Mammary epithelial cell (primary cell): ENCODE measurements at regions of chr2 and their contacts with region 1.

Region 1: DNA sequence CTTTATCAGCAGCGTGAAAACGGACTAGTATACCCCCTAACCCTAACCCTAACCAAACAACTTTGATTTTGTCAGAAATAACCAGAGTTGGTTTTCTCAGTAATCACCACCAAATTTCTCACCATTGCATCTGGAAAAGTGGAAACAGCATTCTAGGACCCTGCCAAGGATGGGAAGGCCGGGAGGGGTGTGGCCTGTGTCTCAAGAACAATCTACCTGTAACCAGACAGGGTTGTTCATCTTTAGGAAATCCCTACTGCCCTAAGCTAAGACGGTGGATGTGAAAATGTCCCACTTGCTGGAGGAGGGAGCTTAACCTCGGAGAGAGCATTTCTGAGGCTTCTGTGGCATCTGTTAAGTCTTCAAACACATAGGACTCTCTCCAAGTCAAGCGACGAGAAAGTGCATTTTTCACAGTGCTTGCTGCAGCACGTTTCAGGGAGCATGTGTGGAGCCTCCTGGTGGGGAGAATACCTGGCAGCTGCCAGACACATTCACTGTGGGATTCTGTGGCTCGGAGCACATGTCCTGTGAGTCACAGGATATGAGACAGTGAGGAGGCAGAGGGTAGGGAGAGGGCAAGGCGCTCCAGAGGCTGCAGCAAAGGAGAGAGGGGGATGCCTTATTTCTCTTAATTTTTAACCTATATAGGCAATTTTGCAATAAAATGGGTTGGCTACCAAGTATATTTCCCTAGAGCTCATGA is 207.5 kb downstream of the SPP2 start:
- DNase-seq: peak; percentile 99
- H3K4me3 ChIP-seq: no peak overlapping the region
- H3K27ac ChIP-seq: peak overlapping the region; percentile 99
- H3K4me1 ChIP-seq: peaks cover 76% of the 10 kb centered on the region
- H3K27me3 ChIP-seq: no peaks in the 10 kb centered on the region
- CTCF ChIP-seq: peak; percentile 82 to 83

Region 2: DNA sequence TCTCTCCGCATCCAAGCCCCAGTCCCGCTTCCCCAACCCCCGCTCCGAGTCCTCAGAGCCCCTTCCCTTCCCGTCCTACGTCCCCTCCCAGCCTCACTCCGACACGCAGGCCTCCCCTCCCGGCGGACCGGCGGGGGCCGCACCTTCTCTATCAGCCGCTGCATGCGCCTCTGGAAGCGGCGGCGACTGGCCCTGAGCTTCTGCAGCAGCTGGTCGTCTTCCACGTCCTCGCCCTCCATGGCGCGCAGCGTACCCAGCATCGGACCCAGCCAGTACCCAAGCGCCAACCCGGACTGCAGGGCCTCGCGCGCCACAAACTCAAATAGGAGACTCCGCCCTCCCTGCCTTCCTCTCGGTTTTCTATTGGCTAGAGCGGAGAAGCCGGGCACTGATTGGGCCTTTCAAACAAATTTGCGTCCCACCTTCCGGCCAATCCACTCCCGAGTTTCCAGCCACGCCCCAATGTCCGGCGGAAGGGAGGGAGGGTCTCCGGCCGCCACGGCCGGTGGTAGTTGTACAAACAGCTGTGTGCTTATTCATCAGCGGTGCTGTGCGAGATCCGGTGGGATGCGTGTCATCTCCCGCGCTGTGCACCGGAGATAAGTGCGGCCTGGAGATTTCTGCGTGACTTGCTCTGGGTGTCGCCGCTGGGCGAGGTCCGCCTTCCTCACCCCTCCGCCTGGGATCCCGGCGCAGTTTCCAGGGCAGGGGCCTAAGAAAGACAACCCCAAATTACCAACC is 403.6 kb before region 1 on chr2 and contains the start of gene HJURP:
- CTCF ChIA-PET with region 1: no interaction called
- dilution Hi-C with region 1: no loop called
- in situ Hi-C with region 1: no loop called
- intact Hi-C with region 1: loop called (anchors 10 kb)
- DNase-seq: peak; percentile 93
- H3K4me3 ChIP-seq: peak within 1 kb of the TSS; percentile 94 to 95 (median 95)
- H3K27ac ChIP-seq: peak within 1 kb of the TSS; percentile 53
- H3K4me1 ChIP-seq: peaks cover 26% of the 10 kb centered on the region
- H3K27me3 ChIP-seq: no peaks in the 10 kb centered on the region
- CTCF ChIP-seq: no peak
- total RNA-seq, gene HJURP: 0.67 to 43.5 TPM

Region 3: DNA sequence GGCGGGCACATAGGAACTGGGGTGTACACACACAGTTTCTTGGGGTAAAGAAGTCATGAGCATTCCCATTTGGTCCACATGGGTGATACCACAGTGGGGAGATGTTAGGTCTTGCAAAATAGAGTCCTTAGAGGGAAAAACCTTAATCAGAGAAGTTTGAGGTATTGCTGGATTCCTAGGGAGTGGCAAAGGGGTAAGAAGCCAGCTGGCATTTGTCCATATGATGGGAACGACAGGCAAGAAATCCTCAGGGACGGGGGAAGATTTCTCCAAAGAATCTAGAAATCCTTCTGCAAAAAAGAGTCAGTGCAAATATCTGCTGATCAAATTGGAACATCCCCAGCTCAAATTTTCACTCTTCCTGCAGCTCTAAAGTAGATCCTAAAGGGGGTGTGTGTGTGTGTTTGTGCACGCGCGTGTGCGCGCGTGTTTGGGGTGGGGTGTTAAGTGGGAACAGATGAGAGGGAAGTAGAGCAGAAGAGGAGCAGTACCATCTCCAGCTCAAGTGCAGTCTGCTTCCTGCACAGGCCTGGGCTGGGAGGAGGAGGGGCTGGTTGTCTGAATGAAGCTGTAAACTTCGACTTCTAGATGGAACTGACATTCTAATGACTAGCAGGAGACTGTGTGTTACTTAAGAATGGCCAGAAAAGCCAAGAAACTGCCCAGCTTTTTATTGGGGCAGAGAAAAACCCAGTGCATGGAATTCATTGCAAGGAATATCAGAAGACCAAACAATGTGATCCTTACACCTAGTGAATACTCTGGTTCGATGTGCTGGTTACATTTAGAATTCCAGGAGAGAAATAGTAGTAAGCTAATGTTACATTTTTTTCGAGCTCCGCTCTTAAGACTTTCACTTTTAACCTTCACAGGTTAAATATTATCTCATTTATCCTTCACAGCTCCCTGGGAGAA is 39.5 kb before region 1 on chr2:
- CTCF ChIA-PET with region 1: no interaction called
- dilution Hi-C with region 1: no loop called
- in situ Hi-C with region 1: no loop called
- intact Hi-C with region 1: no loop called
- DNase-seq: no peak
- H3K4me3 ChIP-seq: no peak overlapping the region
- H3K27ac ChIP-seq: no peak overlapping the region
- H3K4me1 ChIP-seq: peaks cover 5% of the 10 kb centered on the region
- H3K27me3 ChIP-seq: no peaks in the 10 kb centered on the region
- CTCF ChIP-seq: no peak

Region 4: DNA sequence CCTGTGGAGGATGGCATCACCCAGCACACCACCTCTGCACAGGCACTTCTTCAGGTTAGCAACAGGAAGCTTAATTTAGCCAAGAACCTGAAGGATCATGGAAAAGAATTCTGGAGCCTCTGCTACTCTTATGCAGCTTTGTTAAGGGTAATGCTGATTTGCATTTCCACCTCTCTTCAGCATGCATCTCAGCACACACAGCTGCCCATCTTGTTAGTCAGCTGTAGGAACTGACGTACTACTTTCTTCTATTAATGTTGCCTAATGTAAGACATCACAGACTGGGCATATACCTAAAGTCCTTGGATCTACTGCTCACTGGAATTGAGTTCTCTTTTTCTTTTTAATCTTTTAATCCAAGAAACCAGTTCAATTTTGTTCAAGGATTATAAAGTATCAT is 26.5 kb before region 1 on chr2:
- CTCF ChIA-PET with region 1: no interaction called
- dilution Hi-C with region 1: no loop called
- in situ Hi-C with region 1: no loop called
- intact Hi-C with region 1: no loop called
- DNase-seq: no peak
- H3K4me3 ChIP-seq: no peak overlapping the region
- H3K27ac ChIP-seq: no peak overlapping the region
- H3K4me1 ChIP-seq: no peaks in the 10 kb centered on the region
- H3K27me3 ChIP-seq: no peaks in the 10 kb centered on the region
- CTCF ChIP-seq: no peak

Region 5: GRCh38 chr2:234241656-234242458 is 16.2 kb before region 1 on chr2:
- CTCF ChIA-PET with region 1: no interaction called
- dilution Hi-C with region 1: no loop called
- in situ Hi-C with region 1: no loop called
- intact Hi-C with region 1: loop called (anchors 1 kb)
- DNase-seq: peak; percentile 93
- H3K4me3 ChIP-seq: peak overlapping the region in 2 of 3 experiments; percentile 1 to 27
- H3K27ac ChIP-seq: peak overlapping the region; percentile 95
- H3K4me1 ChIP-seq: peaks cover 52% of the 10 kb centered on the region
- H3K27me3 ChIP-seq: no peaks in the 10 kb centered on the region
- CTCF ChIP-seq: no peak

Region 6: GRCh38 chr2:234308813-234309195 is 50.8 kb after region 1 on chr2:
- CTCF ChIA-PET with region 1: no interaction called
- dilution Hi-C with region 1: loop called (anchors 5 kb)
- in situ Hi-C with region 1: no loop called
- intact Hi-C with region 1: no loop called
- DNase-seq: no peak
- H3K4me3 ChIP-seq: no peak overlapping the region
- H3K27ac ChIP-seq: no peak overlapping the region
- H3K4me1 ChIP-seq: peaks cover 26% of the 10 kb centered on the region
- H3K27me3 ChIP-seq: no peaks in the 10 kb centered on the region
- CTCF ChIP-seq: no peak

Region 7: DNA sequence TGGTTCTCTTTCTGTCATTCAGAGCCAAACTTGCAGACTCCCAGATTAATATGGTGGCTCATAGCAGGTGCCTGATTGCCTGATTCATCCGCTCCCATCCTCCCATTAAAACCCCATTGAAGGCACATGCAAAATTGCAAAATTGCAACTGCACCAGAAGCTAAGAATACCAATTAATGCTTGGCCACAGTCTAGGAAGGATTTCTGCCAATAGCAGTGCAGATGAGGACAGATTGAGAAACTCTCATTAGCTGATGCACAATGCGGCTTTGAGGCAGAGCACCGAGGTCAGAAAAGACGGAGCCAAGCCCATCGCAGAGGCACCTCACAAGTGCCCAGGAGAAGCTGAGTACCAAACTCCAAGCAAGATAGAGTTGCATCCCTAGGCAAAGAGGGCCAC is 66.1 kb after region 1 on chr2:
- CTCF ChIA-PET with region 1: no interaction called
- dilution Hi-C with region 1: no loop called
- in situ Hi-C with region 1: no loop called
- intact Hi-C with region 1: no loop called
- DNase-seq: no peak
- H3K4me3 ChIP-seq: no peak overlapping the region
- H3K27ac ChIP-seq: no peak overlapping the region
- H3K4me1 ChIP-seq: no peaks in the 10 kb centered on the region
- H3K27me3 ChIP-seq: no peaks in the 10 kb centered on the region
- CTCF ChIP-seq: no peak

Region 8: GRCh38 chr2:234377761-234378391 is 119.9 kb after region 1 on chr2:
- CTCF ChIA-PET with region 1: no interaction called
- dilution Hi-C with region 1: no loop called
- in situ Hi-C with region 1: no loop called
- intact Hi-C with region 1: no loop called
- DNase-seq: no peak
- H3K4me3 ChIP-seq: no peak overlapping the region
- H3K27ac ChIP-seq: no peak overlapping the region
- H3K4me1 ChIP-seq: peaks cover 34% of the 10 kb centered on the region
- H3K27me3 ChIP-seq: no peaks in the 10 kb centered on the region
- CTCF ChIP-seq: no peak

Region 9: GRCh38 chr2:234544659-234545611 is 286.9 kb after region 1 on chr2:
- CTCF ChIA-PET with region 1: no interaction called
- dilution Hi-C with region 1: no loop called
- in situ Hi-C with region 1: no loop called
- intact Hi-C with region 1: loop called (anchors 1 kb)
- DNase-seq: peak; percentile 47
- H3K4me3 ChIP-seq: no peak overlapping the region
- H3K27ac ChIP-seq: no peak overlapping the region
- H3K4me1 ChIP-seq: peaks cover 6% of the 10 kb centered on the region
- H3K27me3 ChIP-seq: no peaks in the 10 kb centered on the region
- CTCF ChIP-seq: peak; percentile 87 to 92